ENCODE measurements at regions of chr1 and their contacts with region 1.

Region 1: DNA sequence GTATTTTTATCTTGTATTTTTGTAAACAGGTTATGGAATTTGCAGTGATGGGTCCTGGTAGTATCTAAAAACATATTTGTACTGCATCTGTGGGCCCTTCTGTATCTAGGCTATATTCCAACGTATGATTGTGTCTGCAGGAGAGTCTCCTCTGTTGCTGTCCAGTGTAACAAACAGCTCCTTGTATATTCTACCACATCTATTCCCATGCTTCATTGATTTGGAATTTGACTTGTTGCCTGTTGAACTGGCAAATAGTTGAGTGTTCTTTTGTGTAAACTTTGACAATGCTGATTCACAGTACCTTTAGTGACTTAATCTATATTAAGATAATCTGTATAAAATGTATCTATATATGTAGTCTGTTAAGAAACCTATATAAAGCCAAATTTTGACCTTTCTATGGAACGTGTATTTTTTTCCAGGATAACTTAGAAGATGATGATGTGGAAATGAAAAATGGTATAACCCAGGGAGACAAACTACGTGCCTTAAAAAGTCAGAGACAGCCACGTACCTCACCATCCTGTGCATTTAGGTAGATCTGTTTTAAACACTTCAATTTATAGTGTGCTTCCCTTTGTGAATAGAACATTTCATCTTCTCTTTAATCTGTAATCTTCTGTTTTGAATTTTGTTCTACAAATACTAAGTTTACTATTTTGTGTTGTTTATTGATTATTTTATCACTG is 43.4 kb upstream of the GPR88 start:
- DNase-seq: no peak
- ATAC-seq: no peak
- H3K4me3 ChIP-seq: no peak overlapping the region
- H3K4me3 Mint-ChIP-seq: no peak overlapping the region
- H3K27ac ChIP-seq: no peak overlapping the region
- H3K27ac Mint-ChIP-seq: peak overlapping the region in 4 of 9 donors; percentile 7 to 34 (median 14)
- H3K4me1 ChIP-seq: no peaks in the 10 kb centered on the region
- H3K4me1 Mint-ChIP-seq: peaks cover 0 to 19% (median 9%) of the 10 kb centered on the region in 7 donors
- H3K27me3 ChIP-seq: no peaks in the 10 kb centered on the region
- H3K27me3 Mint-ChIP-seq: no peaks in the 10 kb centered on the region

Region 2: DNA sequence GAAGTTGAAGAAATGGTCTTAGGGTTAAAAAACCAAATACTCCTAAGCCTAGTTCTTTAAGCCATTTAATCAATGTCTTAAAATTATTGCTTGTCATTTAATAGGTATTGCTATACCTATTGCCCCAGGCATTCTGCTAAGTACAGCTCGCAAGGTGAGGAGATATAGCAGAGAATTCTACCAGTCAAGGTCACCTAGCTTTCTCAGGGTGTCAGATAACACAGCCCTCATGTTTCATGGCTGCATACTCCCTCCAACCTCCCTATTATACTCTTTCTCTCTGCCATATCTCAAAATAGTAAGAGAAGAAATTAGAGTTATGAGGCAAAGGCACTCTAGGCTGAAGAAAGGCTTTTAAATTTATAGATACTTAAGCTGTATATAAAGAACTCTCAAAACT is 25.0 kb before region 1 on chr1:
- CTCF ChIA-PET with region 1: no interaction called
- POLR2A ChIA-PET with region 1: no interaction called
- intact Hi-C with region 1: loop called in 1 of 2 experiments (anchors 2 kb)
- DNase-seq: no peak
- ATAC-seq: no peak
- H3K4me3 ChIP-seq: no peak overlapping the region
- H3K4me3 Mint-ChIP-seq: no peak overlapping the region
- H3K27ac ChIP-seq: no peak overlapping the region
- H3K27ac Mint-ChIP-seq: peak overlapping the region in 2 of 9 donors; percentile 7 to 36
- H3K4me1 ChIP-seq: no peaks in the 10 kb centered on the region
- H3K4me1 Mint-ChIP-seq: peaks cover 11 to 54% (median 37%) of the 10 kb centered on the region in 7 donors
- H3K27me3 ChIP-seq: no peaks in the 10 kb centered on the region
- H3K27me3 Mint-ChIP-seq: no peaks in the 10 kb centered on the region

Region 3: GRCh38 chr1:100482167-100482566 is 12.4 kb before region 1 on chr1:
- CTCF ChIA-PET with region 1: no interaction called
- POLR2A ChIA-PET with region 1: no interaction called
- intact Hi-C with region 1: loop called in 1 of 2 experiments (anchors 2 kb)
- DNase-seq: no peak
- ATAC-seq: no peak
- H3K4me3 ChIP-seq: no peak overlapping the region
- H3K4me3 Mint-ChIP-seq: no peak overlapping the region
- H3K27ac ChIP-seq: no peak overlapping the region
- H3K27ac Mint-ChIP-seq: peak overlapping the region in 2 of 9 donors; percentile 10 to 28
- H3K4me1 ChIP-seq: no peaks in the 10 kb centered on the region
- H3K4me1 Mint-ChIP-seq: peaks cover 0 to 35% (median 11%) of the 10 kb centered on the region in 7 donors
- H3K27me3 ChIP-seq: no peaks in the 10 kb centered on the region
- H3K27me3 Mint-ChIP-seq: no peaks in the 10 kb centered on the region

Region 4: GRCh38 chr1:100543640-100544039 is 49.1 kb after region 1 on chr1:
- CTCF ChIA-PET with region 1: no interaction called
- POLR2A ChIA-PET with region 1: no interaction called
- intact Hi-C with region 1: no loop called
- DNase-seq: peak in 5 of 9 donors; percentile 17 to 39 (median 25)
- ATAC-seq: peak; percentile 76
- H3K4me3 ChIP-seq: no peak overlapping the region
- H3K4me3 Mint-ChIP-seq: no peak overlapping the region
- H3K27ac ChIP-seq: no peak overlapping the region
- H3K27ac Mint-ChIP-seq: no peak overlapping the region
- H3K4me1 ChIP-seq: peaks cover 4% of the 10 kb centered on the region in 2 donors
- H3K4me1 Mint-ChIP-seq: peaks cover 0 to 12% (median 7%) of the 10 kb centered on the region in 7 donors
- H3K27me3 ChIP-seq: peaks cover 4 to 7% of the 10 kb centered on the region in 2 donors
- H3K27me3 Mint-ChIP-seq: peaks cover 23 to 54% (median 30%) of the 10 kb centered on the region in 5 donors

Region 5: DNA sequence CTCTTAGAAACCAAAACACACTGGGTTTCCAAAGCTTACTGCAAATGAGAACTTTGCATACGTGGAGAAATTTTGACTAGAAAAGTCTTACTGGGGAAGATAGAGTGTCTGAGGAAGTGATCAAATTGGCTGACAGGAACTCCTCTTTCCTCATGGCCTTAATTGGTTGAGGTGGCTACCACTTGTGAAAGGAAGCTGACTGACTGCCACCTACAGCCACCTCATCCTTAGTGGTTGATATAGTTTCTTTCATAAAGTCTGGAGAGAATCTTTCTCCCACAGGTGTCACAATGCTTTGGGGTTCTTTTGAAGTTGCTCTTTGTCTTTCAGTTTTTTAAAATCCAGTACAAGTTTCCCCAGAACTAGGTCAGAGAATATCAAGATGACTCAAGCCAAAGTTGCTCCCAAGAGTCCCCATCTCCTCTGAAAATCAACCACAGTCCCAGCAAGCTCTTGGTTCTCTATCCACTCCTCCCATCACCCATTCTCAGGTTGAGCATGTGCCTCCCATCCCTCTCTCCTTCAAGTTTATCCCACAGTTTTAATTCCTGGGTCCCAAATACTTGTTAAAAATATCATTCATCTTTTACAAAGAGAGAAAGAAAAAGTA is 86.7 kb after region 1 on chr1:
- CTCF ChIA-PET with region 1: no interaction called
- POLR2A ChIA-PET with region 1: no interaction called
- intact Hi-C with region 1: no loop called
- DNase-seq: no peak
- ATAC-seq: no peak
- H3K4me3 ChIP-seq: no peak overlapping the region
- H3K4me3 Mint-ChIP-seq: no peak overlapping the region
- H3K27ac ChIP-seq: no peak overlapping the region
- H3K27ac Mint-ChIP-seq: no peak overlapping the region
- H3K4me1 ChIP-seq: no peaks in the 10 kb centered on the region
- H3K4me1 Mint-ChIP-seq: peaks cover 0 to 10% (median 0%) of the 10 kb centered on the region in 7 donors
- H3K27me3 ChIP-seq: no peaks in the 10 kb centered on the region
- H3K27me3 Mint-ChIP-seq: peaks cover 0 to 14% (median 4%) of the 10 kb centered on the region in 5 donors